ENCODE measurements at regions of chr22 and their contacts with region 1.

Region 1: GRCh38 chr22:32796865-32797573 is 4.5 kb upstream of the TIMP3 start:
- DNase-seq: peak; percentile 46
- ATAC-seq: peak; percentile 91
- H3K4me3 ChIP-seq: no peak overlapping the region
- H3K27ac ChIP-seq: no peak overlapping the region
- H3K4me1 ChIP-seq: peaks cover 0 to 3% of the 10 kb centered on the region in 2 experiments; a peak in 1 of 4 replicates
- H3K27me3 ChIP-seq: peaks cover 5% of the 10 kb centered on the region; the same call in 1 of the 2 replicates
- CTCF ChIP-seq: peak; percentile 73 to 92 (median 90)
- POLR2A ChIP-seq: no peak
- RAD21 ChIP-seq: peak; percentile 86

Region 2: DNA sequence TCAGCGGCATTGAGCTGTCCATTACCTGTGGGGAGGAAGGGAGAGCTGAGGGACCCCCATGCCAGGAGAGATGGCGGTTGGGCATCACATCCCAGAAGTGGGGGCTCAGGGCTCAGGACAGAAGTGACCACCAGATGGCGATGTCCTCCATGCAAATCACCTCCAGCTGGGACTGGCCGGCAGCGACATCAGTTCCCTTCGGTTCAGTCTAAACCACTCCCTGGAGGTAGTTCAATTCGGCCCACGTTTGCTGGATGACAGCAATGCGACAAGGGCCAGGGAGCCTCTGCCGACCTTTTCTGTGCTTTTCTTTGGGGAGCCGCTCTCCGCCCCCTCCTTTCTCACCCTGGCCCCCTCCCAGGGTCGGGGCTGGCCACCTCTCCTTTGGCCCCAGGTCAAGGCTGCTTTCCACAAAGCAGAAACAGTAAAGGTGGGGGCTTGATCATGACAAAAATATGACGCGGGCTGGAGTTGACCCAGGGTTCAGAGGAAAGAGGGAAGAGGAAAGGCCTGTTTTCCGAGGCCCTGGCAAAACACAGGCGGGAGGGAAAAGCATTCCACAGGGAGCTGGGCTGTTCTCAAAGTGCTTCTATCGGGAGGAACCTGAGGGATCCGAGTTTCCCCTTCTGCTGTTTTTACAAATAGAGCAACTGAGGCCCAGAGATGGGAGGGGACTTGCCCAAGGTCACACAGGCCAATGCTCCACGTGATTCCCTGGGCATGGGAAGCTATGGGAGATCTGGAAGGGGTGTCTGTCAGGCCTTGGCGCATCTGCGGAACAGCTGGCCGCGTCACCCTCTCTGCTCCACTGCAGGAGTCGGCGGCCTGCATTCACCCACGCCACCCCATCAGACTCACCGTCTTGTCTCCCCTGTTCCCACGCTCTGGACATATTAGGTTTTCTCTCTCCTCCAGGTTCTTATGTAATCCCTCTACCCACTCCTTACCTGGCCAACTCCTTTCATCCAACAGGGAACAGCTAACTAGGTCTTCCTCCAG is 267.7 kb before region 1 on chr22:
- CTCF ChIA-PET with region 1: interaction called, 114 read pairs
- POLR2A ChIA-PET with region 1: no interaction called
- RAD21 ChIA-PET with region 1: interaction called, 10 to 24 read pairs
- intact Hi-C with region 1: loop called (anchors 1 kb)
- DNase-seq: peak; percentile 74
- ATAC-seq: peak; percentile 98
- H3K4me3 ChIP-seq: no peak overlapping the region
- H3K27ac ChIP-seq: no peak overlapping the region
- H3K4me1 ChIP-seq: peaks cover 0 to 4% of the 10 kb centered on the region in 2 experiments; a peak in 2 of 4 replicates
- H3K27me3 ChIP-seq: no peaks in the 10 kb centered on the region
- CTCF ChIP-seq: peak; percentile 61 to 91 (median 88)
- POLR2A ChIP-seq: no peak
- RAD21 ChIP-seq: peak; percentile 84

Region 3: GRCh38 chr22:32660292-32660691 is 136.7 kb before region 1 on chr22:
- CTCF ChIA-PET with region 1: interaction called, 200 read pairs
- POLR2A ChIA-PET with region 1: interaction called, 5 read pairs
- RAD21 ChIA-PET with region 1: interaction called, 14 to 25 read pairs
- intact Hi-C with region 1: loop called (anchors 1 kb)
- DNase-seq: peak; percentile 37
- ATAC-seq: peak; percentile 94
- H3K4me3 ChIP-seq: no peak overlapping the region
- H3K27ac ChIP-seq: no peak overlapping the region
- H3K4me1 ChIP-seq: no peaks in the 10 kb centered on the region
- H3K27me3 ChIP-seq: peaks cover 19% of the 10 kb centered on the region; the same call in 1 of the 2 replicates
- CTCF ChIP-seq: peak; percentile 77 to 82 (median 80)
- POLR2A ChIP-seq: no peak
- RAD21 ChIP-seq: peak; percentile 85

Region 4: DNA sequence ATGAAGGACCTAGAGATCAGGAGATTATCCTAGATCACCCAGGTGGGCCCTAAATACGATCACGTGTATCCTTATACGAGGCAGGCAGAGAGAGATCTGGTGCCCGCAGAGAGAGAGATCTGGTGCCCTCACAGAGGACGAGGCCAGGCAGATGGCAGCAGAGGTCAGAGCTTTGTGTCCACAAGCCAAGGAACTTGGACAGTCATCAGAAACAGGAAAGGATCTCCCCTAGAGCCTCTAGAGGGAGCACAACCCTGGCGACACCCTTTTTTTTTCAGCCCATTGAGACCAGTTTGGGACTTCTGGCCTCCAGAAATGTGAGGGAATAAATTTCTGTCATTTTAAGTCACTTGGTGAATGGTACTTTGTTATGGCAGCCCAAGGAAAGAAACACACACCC is 21.1 kb before region 1 on chr22:
- CTCF ChIA-PET with region 1: interaction called, 18 read pairs
- POLR2A ChIA-PET with region 1: no interaction called
- RAD21 ChIA-PET with region 1: no interaction called
- intact Hi-C with region 1: no loop called
- DNase-seq: no peak
- ATAC-seq: peak; percentile 86
- H3K4me3 ChIP-seq: no peak overlapping the region
- H3K27ac ChIP-seq: no peak overlapping the region
- H3K4me1 ChIP-seq: peaks cover 0 to 2% of the 10 kb centered on the region in 2 experiments; a peak in 1 of 4 replicates
- H3K27me3 ChIP-seq: no peaks in the 10 kb centered on the region
- CTCF ChIP-seq: peak; percentile 38 to 77 (median 67); a peak in 5 of 6 replicates
- POLR2A ChIP-seq: no peak
- RAD21 ChIP-seq: peak; percentile 33; the same call in 1 of the 2 replicates

Region 5: GRCh38 chr22:33000342-33001280 is 203.6 kb after region 1 on chr22:
- CTCF ChIA-PET with region 1: no interaction called
- POLR2A ChIA-PET with region 1: no interaction called
- RAD21 ChIA-PET with region 1: no interaction called
- intact Hi-C with region 1: loop called (anchors 2 kb)
- DNase-seq: no peak
- ATAC-seq: peak; percentile 88
- H3K4me3 ChIP-seq: no peak overlapping the region
- H3K27ac ChIP-seq: no peak overlapping the region
- H3K4me1 ChIP-seq: peaks cover 0 to 4% of the 10 kb centered on the region in 2 experiments; a peak in 1 of 4 replicates
- H3K27me3 ChIP-seq: peaks cover 5% of the 10 kb centered on the region
- CTCF ChIP-seq: peak; percentile 31 to 91 (median 83); a peak in 4 of 6 replicates
- POLR2A ChIP-seq: no peak
- RAD21 ChIP-seq: peak; percentile 66